ENCODE measurements at regions of chr14 and their contacts with region 1.

Region 1: GRCh38 chr14:63276492-63277342 is 42.0 kb downstream of the GPHB5 start:
- DNase-seq: peak; percentile 21
- H3K4me3 ChIP-seq: no peak overlapping the region
- H3K27ac ChIP-seq: no peak overlapping the region
- H3K27me3 ChIP-seq: no peaks in the 10 kb centered on the region
- CTCF ChIP-seq: peak; percentile 73

Region 2: DNA sequence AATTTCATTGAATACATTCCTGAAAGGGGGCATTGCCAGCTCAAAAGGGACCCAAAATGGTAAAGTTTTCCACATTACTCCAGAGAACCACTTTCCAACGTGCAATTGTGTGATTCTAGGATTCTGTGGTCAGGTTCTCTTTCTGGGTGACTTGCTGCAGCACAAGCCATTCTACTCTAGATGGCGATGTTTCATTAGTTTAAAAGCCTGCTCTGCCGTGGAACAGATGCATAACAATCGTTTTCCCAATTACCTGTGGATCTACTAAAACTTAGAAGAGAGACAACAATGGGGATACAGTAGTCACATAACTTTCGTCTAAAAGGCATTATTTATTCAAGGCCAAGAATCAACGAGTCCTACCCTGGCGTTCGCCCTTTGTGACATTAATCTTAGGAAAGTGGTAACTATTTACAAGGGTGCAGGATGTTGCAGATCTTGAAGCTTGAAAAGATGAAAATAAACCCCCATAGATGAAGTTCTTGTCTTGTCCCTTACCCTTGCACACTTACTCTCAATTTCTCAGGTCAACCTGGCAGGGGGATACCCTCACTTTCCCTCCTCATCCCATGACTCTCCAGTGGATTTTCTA is 1113.6 kb before region 1 on chr14:
- CTCF ChIA-PET with region 1: interaction called, 38 read pairs
- POLR2A ChIA-PET with region 1: no interaction called
- DNase-seq: no peak
- H3K4me3 ChIP-seq: no peak overlapping the region
- H3K27ac ChIP-seq: no peak overlapping the region
- H3K27me3 ChIP-seq: no peaks in the 10 kb centered on the region
- CTCF ChIP-seq: peak; percentile 95

Region 3: GRCh38 chr14:62168564-62169155 is 1108.1 kb before region 1 on chr14:
- CTCF ChIA-PET with region 1: interaction called, 38 read pairs
- POLR2A ChIA-PET with region 1: no interaction called
- DNase-seq: no peak
- H3K4me3 ChIP-seq: no peak overlapping the region
- H3K27ac ChIP-seq: no peak overlapping the region
- H3K27me3 ChIP-seq: no peaks in the 10 kb centered on the region
- CTCF ChIP-seq: peak; percentile 29

Region 4: DNA sequence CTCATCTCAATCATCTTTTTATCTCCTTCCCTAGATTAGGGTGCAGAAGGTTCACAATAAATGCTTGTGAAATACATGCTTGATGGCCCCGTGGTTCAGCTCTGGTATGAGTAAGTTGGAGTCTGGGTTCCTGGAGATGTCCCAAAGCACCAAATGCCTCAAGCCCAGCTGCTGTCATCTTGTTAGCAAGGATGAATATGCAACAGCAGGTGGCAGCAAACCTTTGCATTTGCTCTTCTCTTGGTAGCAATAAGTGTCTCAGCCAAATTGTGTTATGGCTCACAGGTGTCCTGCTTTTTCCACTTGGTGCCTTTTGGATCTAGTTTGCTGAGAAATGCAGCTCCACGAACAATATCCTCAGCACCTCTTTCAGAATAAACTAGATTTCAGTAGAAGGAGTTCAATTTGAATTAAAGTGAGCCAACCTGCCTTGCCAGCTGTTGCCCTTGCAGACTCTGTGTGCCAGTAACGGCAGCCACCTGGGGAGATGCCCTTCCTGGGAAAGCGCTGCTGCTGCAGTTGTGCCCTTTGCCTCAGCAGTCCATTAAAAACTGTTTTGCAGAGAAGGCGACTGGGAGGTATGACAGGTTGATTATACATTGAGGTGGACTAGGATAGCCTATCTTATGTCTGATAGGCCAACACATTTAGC is 1097.2 kb before region 1 on chr14:
- CTCF ChIA-PET with region 1: interaction called, 19 read pairs
- POLR2A ChIA-PET with region 1: no interaction called
- DNase-seq: peak; percentile 87
- H3K4me3 ChIP-seq: no peak overlapping the region
- H3K27ac ChIP-seq: no peak overlapping the region
- H3K27me3 ChIP-seq: no peaks in the 10 kb centered on the region
- CTCF ChIP-seq: peak; percentile 84

Region 5: DNA sequence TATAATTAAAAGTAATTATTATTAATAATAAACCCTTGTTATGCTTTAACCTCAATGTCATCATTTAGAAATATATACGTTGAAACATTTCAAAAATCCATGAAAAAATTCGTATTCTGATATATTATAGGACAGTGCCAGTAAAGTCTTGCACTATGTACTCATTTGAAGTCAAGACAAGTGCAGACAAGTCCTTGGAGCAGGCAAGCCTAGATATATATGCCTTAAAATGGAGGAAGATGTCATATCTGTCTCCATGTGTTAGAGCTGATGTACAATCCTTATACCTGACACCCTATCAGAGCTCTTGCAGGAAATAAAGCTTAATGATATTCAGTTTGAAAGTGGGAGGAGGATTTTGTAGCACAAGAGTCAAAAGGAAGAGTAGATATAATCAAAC is 541.9 kb before region 1 on chr14:
- CTCF ChIA-PET with region 1: no interaction called
- POLR2A ChIA-PET with region 1: no interaction called
- DNase-seq: no peak
- H3K4me3 ChIP-seq: no peak overlapping the region
- H3K27ac ChIP-seq: no peak overlapping the region
- H3K27me3 ChIP-seq: no peaks in the 10 kb centered on the region
- CTCF ChIP-seq: no peak

Region 6: GRCh38 chr14:63174760-63175211 is 101.9 kb before region 1 on chr14:
- CTCF ChIA-PET with region 1: interaction called, 90 read pairs
- POLR2A ChIA-PET with region 1: no interaction called
- DNase-seq: peak; percentile 34
- H3K4me3 ChIP-seq: no peak overlapping the region
- H3K27ac ChIP-seq: no peak overlapping the region
- H3K27me3 ChIP-seq: no peaks in the 10 kb centered on the region
- CTCF ChIP-seq: peak; percentile 79

Region 7: GRCh38 chr14:63308723-63309317 is 32.1 kb after region 1 on chr14:
- CTCF ChIA-PET with region 1: no interaction called
- POLR2A ChIA-PET with region 1: no interaction called
- DNase-seq: no peak
- H3K4me3 ChIP-seq: no peak overlapping the region
- H3K27ac ChIP-seq: no peak overlapping the region
- H3K27me3 ChIP-seq: no peaks in the 10 kb centered on the region
- CTCF ChIP-seq: peak; percentile 71